Esophagus muscularis mucosa (tissue), 4 donors: ENCODE measurements at regions of chr1 and their contacts with region 1.

Region 1: DNA sequence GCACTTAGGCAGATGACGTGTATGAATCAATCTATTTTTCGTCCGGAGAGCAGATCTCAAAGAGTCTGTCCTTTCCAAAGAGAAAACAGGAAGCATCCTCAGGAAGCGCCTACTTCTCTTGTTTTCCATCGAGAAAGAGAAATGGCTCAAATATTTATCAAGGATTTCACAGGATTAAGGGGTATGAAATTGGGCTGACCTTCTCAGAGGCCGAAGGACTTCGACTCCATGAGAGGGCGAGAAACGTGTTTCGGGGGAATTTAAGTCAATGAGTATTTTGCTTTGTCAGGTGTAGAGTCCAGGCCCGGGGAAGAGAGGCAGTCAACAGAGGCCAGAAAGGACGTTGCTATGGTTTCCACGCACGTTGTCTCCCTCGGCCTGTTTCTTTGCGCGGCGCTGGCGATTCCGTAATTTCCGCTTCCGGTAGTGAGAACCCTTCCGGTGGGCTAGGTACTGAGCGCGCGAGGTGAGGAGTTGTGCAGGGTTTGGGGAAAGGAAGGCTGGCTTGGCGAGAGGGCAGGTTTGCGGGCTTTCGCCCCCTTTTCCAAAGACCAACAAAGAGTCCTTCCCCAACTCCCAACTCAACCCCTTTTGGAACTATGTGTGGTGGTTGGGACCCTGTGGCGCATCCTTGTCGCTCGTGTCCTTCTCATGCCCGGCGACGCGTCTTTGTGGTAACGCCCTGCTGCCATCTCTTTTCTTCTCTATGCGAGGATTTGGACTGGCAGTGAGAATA is at the start of gene MRPS21:
- DNase-seq: peak; percentile 97
- H3K4me3 ChIP-seq: peak within 1 kb of the TSS; percentile 65 to 79 (median 71)
- H3K27ac ChIP-seq: peak within 1 kb of the TSS; percentile 80 to 89 (median 82)
- H3K4me1 ChIP-seq: peaks cover 15 to 21% (median 19%) of the 10 kb centered on the region in 4 donors
- H3K27me3 ChIP-seq: no peaks in the 10 kb centered on the region
- CTCF ChIP-seq: no peak
- EP300 ChIP-seq: no peak
- POLR2A ChIP-seq: peak; percentile 71
- total RNA-seq, gene MRPS21: 44.2 to 59.0 (median 48.1) TPM

Region 2: DNA sequence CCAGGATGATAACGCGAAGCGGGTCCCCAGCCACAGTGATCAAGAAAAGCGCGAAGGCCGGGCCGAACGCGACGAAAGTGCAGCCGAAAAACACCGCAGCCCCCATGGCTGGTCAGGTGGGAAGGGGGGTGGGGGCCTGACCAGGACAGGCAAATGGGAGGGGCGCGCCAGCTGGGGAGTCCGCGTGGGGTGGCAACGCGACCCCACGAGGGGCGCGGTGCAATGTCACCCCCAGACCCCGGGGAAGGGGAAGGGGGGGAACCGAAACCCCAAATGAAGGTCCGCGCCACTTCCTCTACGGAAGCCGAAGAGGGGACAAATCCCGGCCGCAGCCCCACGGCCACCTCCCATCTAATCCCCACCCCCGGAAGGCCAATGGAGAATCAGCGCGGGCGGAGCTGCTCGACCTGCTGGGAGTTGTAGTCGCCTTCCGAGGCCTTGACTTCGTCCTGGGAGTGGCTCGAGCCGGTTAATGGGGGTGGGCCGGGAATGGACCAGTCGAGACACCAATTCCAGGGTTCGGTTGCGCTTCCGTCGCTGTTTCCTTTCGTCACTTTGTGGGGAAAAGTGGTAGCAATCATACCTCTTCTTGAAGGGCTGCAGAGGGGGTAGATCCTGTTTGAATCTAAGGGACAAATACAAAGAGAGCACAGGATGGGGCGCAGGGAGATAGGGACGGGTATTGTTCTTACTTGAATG is 24.7 kb before region 1 on chr1 and contains the start of gene APH1A:
- intact Hi-C with region 1: loop called (anchors 2 kb)
- DNase-seq: peak; percentile 99
- H3K4me3 ChIP-seq: peak within 1 kb of the TSS; percentile 76 to 99 (median 94)
- H3K27ac ChIP-seq: peak within 1 kb of the TSS; percentile 92 to 98 (median 96)
- H3K4me1 ChIP-seq: peaks cover 34 to 54% (median 47%) of the 10 kb centered on the region in 4 donors
- H3K27me3 ChIP-seq: no peaks in the 10 kb centered on the region
- CTCF ChIP-seq: no peak
- EP300 ChIP-seq: no peak
- POLR2A ChIP-seq: peak; percentile 74
- total RNA-seq, gene APH1A: 36.1 to 63.5 (median 49.7) TPM